Stomach (tissue), 19 donors: ENCODE measurements at regions of chr18 and their contacts with region 1.

Region 1: GRCh38 chr18:51107082-51107481 is 77.1 kb downstream of the SMAD4 start:
- DNase-seq: no peak
- H3K4me3 ChIP-seq: no peak overlapping the region
- H3K27ac ChIP-seq: no peak overlapping the region
- H3K4me1 ChIP-seq: peaks cover 5 to 6% (median 6%) of the 10 kb centered on the region in 4 donors
- H3K27me3 ChIP-seq: no peaks in the 10 kb centered on the region
- CTCF ChIP-seq: no peak
- EP300 ChIP-seq: no peak
- POLR2A ChIP-seq: no peak

Region 2: GRCh38 chr18:51185075-51185474 is 78.0 kb after region 1 on chr18:
- intact Hi-C with region 1: no loop called
- DNase-seq: no peak
- H3K4me3 ChIP-seq: no peak overlapping the region
- H3K27ac ChIP-seq: no peak overlapping the region
- H3K4me1 ChIP-seq: peaks cover 4 to 83% (median 42%) of the 10 kb centered on the region in 4 donors
- H3K27me3 ChIP-seq: no peaks in the 10 kb centered on the region
- CTCF ChIP-seq: no peak
- EP300 ChIP-seq: no peak
- POLR2A ChIP-seq: no peak

Region 3: DNA sequence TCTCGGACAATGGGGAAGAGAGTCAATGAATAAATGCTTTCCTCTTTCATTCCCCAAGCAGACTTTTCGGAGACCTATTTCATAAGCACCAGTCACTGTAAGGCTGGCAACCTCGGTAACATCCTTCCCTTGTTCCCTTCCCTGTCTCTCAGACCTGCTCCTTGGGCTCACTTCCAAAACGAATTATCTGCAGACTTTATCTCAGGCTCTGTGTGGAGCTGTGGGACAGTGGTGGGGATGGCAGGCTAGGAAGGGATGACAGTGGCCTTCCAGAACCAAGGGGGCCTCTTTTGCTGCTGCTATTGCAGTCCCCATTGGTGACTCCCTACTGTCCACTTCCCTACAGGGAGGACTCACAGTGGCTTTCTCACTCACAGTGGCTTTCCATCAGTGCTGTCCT is 276.0 kb after region 1 on chr18:
- intact Hi-C with region 1: loop called (anchors 10 kb)
- DNase-seq: no peak
- H3K4me3 ChIP-seq: no peak overlapping the region
- H3K27ac ChIP-seq: no peak overlapping the region
- H3K4me1 ChIP-seq: no peaks in the 10 kb centered on the region
- H3K27me3 ChIP-seq: no peaks in the 10 kb centered on the region
- CTCF ChIP-seq: no peak
- EP300 ChIP-seq: no peak
- POLR2A ChIP-seq: no peak